ENCODE measurements at regions of chr14 and their contacts with region 1.

Region 1: GRCh38 chr14:78509516-78509915 is 339.3 kb downstream of the NRXN3 start:
- DNase-seq: no peak
- H3K4me3 ChIP-seq: no peak overlapping the region
- H3K27ac ChIP-seq: no peak overlapping the region
- H3K4me1 ChIP-seq: no peaks in the 10 kb centered on the region
- H3K27me3 ChIP-seq: no peaks in the 10 kb centered on the region
- CTCF ChIP-seq: peak in 1 of 3 experiments; percentile 7; a peak in 1 of 4 replicates
- EP300 ChIP-seq: no peak
- POLR2A ChIP-seq: no peak
- RAD21 ChIP-seq: 0 out of 4 replicates have a peak, but pooled peaks of 1 of the 2 experiments have one; percentile 11

Region 2: GRCh38 chr14:78425782-78426181 is 83.7 kb before region 1 on chr14:
- CTCF ChIA-PET with region 1: no interaction called
- POLR2A ChIA-PET with region 1: no interaction called
- DNase-seq: no peak
- H3K4me3 ChIP-seq: no peak overlapping the region
- H3K27ac ChIP-seq: no peak overlapping the region
- H3K4me1 ChIP-seq: no peaks in the 10 kb centered on the region; a peak in 1 of 7 replicates
- H3K27me3 ChIP-seq: no peaks in the 10 kb centered on the region
- CTCF ChIP-seq: no peak
- EP300 ChIP-seq: no peak
- POLR2A ChIP-seq: no peak
- RAD21 ChIP-seq: no peak

Region 3: GRCh38 chr14:78455896-78456435 is 53.5 kb before region 1 on chr14:
- CTCF ChIA-PET with region 1: no interaction called
- POLR2A ChIA-PET with region 1: no interaction called
- DNase-seq: no peak
- H3K4me3 ChIP-seq: no peak overlapping the region
- H3K27ac ChIP-seq: no peak overlapping the region
- H3K4me1 ChIP-seq: no peaks in the 10 kb centered on the region
- H3K27me3 ChIP-seq: no peaks in the 10 kb centered on the region
- CTCF ChIP-seq: no peak
- EP300 ChIP-seq: no peak
- POLR2A ChIP-seq: no peak
- RAD21 ChIP-seq: no peak

Region 4: DNA sequence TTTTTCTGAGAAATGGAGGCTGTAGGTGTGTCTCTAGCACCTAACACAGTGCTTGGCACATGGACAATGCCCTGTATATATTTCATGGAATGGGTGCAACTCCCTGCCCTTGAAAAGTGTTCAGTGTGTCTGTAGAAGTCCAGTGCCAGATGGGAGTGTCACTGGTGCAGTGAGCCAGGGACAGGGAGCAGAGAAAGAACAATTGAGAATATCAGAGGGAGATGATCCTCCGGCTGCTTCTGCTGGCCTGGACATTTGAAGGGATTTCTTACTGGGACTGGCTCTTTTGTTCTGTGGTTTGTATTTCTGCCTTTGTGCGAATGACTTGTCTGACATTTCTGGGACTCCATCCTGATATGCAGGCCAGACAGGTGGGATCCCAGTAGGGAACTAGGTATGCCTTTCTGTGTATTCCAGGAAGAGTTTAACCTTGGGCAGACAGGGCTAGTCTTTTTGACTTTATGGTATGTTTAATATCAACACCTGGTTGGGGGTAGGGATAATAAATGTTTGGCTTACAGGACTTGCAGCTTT is 11.4 kb before region 1 on chr14:
- CTCF ChIA-PET with region 1: interaction called, 15 read pairs
- POLR2A ChIA-PET with region 1: no interaction called
- DNase-seq: no peak
- H3K4me3 ChIP-seq: no peak overlapping the region
- H3K27ac ChIP-seq: no peak overlapping the region
- H3K4me1 ChIP-seq: no peaks in the 10 kb centered on the region
- H3K27me3 ChIP-seq: no peaks in the 10 kb centered on the region
- CTCF ChIP-seq: no peak
- EP300 ChIP-seq: no peak
- POLR2A ChIP-seq: no peak
- RAD21 ChIP-seq: no peak

Region 5: GRCh38 chr14:78690836-78691235 is 181.3 kb after region 1 on chr14:
- CTCF ChIA-PET with region 1: no interaction called
- POLR2A ChIA-PET with region 1: no interaction called
- DNase-seq: no peak
- H3K4me3 ChIP-seq: no peak overlapping the region
- H3K27ac ChIP-seq: no peak overlapping the region
- H3K4me1 ChIP-seq: no peaks in the 10 kb centered on the region
- H3K27me3 ChIP-seq: no peaks in the 10 kb centered on the region
- CTCF ChIP-seq: no peak
- EP300 ChIP-seq: no peak
- POLR2A ChIP-seq: no peak
- RAD21 ChIP-seq: no peak